Endothelial cell of umbilical vein (primary cell): ENCODE measurements at regions of chr4 and their contacts with region 1.

Region 1: GRCh38 chr4:111512081-111512783 is 633.0 kb upstream of the FAM241A start:
- DNase-seq: peak; percentile 76
- H3K4me3 ChIP-seq: no peak overlapping the region
- H3K27ac ChIP-seq: peak overlapping the region; percentile 92
- H3K4me1 ChIP-seq: peaks cover 9% of the 10 kb centered on the region
- H3K27me3 ChIP-seq: no peaks in the 10 kb centered on the region
- CTCF ChIP-seq: no peak
- POLR2A ChIP-seq: no peak

Region 2: GRCh38 chr4:111535792-111536191 is 23.6 kb after region 1 on chr4:
- CTCF ChIA-PET with region 1: interaction called, 3 read pairs
- POLR2A ChIA-PET with region 1: no interaction called
- dilution Hi-C with region 1: no loop called
- intact Hi-C with region 1: loop called (anchors 2 kb)
- DNase-seq: peak; percentile 94
- H3K4me3 ChIP-seq: no peak overlapping the region
- H3K27ac ChIP-seq: peak overlapping the region; percentile 50
- H3K4me1 ChIP-seq: peaks cover 12% of the 10 kb centered on the region
- H3K27me3 ChIP-seq: no peaks in the 10 kb centered on the region
- CTCF ChIP-seq: no peak
- POLR2A ChIP-seq: no peak